Naive thymus-derived CD4-positive, alpha-beta T cell (primary cell): ENCODE measurements at regions of chr7 and their contacts with region 1.

Region 1: GRCh38 chr7:7182156-7183060 is at the start of gene C1GALT1:
- DNase-seq: peak; percentile 92 to 98 (median 98)
- ATAC-seq: peak; percentile 93
- H3K4me3 ChIP-seq: peak within 1 kb of the TSS; percentile 91
- H3K4me3 Mint-ChIP-seq: peak within 1 kb of the TSS in 9 of 10 donors; percentile 87 to 97 (median 94)
- H3K27ac ChIP-seq: peak within 1 kb of the TSS; percentile 95
- H3K27ac Mint-ChIP-seq: peak within 1 kb of the TSS; percentile 93 to 100 (median 98)
- H3K4me1 ChIP-seq: peaks cover 22% of the 10 kb centered on the region in 2 donors
- H3K4me1 Mint-ChIP-seq: peaks cover 0 to 14% (median 10%) of the 10 kb centered on the region in 7 donors
- H3K27me3 ChIP-seq: no peaks in the 10 kb centered on the region
- H3K27me3 Mint-ChIP-seq: no peaks in the 10 kb centered on the region
- total RNA-seq, gene C1GALT1: 51.4 to 60.1 (median 55.6) TPM

Region 2: DNA sequence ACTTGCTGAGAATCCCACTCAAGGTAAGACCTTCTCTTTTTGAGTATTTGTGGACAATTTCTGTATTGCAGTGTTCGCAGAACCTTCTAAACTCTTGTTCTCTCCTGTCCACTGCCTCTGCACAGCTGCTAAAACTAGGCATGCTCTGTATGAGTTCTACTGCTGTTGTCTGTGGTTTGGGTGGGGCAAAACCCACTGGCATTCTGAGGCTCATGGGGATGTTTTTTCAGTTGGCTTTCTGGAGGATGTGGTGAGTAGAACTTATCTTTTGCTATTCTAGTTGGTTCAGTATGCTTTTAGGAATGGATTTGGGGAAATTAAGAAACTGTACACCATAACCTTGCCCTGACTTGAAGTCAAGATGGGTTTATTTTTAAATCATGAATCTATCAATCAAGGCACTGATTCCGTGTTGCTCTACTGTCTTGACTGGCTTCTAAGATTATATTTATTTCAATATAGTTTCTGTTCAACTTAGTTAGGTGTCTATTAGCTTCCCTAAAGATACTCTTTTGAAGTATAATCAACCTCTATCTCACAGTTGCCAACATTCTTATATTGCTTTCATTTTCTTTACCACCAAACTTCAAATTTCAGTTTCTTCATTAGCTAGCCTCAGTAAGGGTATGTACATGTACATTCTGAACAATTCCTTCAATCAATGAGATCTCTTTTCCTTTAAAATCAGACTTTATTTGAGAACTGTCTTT is 25.1 kb before region 1 on chr7:
- CTCF ChIA-PET with region 1: interaction called, 21 read pairs
- POLR2A ChIA-PET with region 1: interaction called, 109 read pairs
- intact Hi-C with region 1: loop called (anchors 1 kb)
- DNase-seq: peak; percentile 16 to 89 (median 83)
- ATAC-seq: peak; percentile 97
- H3K4me3 ChIP-seq: peak overlapping the region; percentile 51
- H3K4me3 Mint-ChIP-seq: peak overlapping the region; percentile 51 to 90 (median 79)
- H3K27ac ChIP-seq: peak overlapping the region; percentile 67
- H3K27ac Mint-ChIP-seq: peak overlapping the region; percentile 81 to 99 (median 92)
- H3K4me1 ChIP-seq: peaks cover 34 to 46% of the 10 kb centered on the region in 2 donors
- H3K4me1 Mint-ChIP-seq: peaks cover 40 to 82% (median 73%) of the 10 kb centered on the region in 7 donors
- H3K27me3 ChIP-seq: no peaks in the 10 kb centered on the region
- H3K27me3 Mint-ChIP-seq: no peaks in the 10 kb centered on the region

Region 3: GRCh38 chr7:7221602-7222038 is 39.2 kb after region 1 on chr7:
- CTCF ChIA-PET with region 1: no interaction called
- POLR2A ChIA-PET with region 1: no interaction called
- intact Hi-C with region 1: loop called in 1 of 2 experiments (anchors 5 kb)
- DNase-seq: no peak
- ATAC-seq: no peak
- H3K4me3 ChIP-seq: no peak overlapping the region
- H3K4me3 Mint-ChIP-seq: peak overlapping the region in 1 of 10 donors; percentile 11
- H3K27ac ChIP-seq: no peak overlapping the region
- H3K27ac Mint-ChIP-seq: peak overlapping the region in 2 of 9 donors; percentile 9 to 25
- H3K4me1 ChIP-seq: no peaks in the 10 kb centered on the region
- H3K4me1 Mint-ChIP-seq: peaks cover 19 to 66% (median 51%) of the 10 kb centered on the region in 7 donors
- H3K27me3 ChIP-seq: no peaks in the 10 kb centered on the region
- H3K27me3 Mint-ChIP-seq: no peaks in the 10 kb centered on the region

Region 4: DNA sequence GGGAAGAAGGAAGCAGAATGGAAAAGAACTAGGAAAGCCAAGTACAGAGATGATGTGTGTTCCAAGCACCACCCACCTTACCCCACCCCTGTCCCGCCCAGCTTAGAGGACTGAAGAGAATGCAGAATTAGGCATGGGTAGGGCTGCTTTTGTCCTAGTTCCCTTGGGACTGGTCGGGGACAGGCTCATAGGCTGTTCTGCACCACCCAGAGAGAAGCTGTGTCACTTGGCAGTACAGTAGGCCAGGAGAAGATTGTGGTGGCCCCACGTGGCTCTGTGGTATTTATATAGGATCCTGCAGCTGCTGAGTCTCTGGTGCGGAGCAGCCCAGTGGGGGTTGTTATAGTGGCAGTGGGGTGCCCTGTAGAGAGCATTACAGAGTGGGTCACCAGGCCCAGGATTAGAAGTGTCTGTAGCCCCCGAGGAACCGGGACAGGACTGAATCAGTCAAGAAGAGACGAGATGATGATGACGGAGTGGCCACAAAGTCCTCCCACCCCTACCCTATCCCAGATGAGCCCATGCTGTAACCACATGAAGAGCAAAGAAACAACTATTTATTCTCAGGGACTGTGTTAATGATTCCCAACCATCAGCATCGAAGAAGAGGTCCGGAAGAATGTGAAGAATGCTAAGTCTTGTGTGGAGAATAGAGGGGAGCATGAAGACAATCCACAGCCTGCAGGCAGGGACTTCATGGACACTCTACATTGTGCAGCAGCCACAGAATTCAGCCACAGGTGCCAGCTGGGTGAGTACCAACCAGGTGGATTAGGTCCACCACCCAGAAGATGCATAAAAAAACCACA is 88.9 kb after region 1 on chr7:
- CTCF ChIA-PET with region 1: no interaction called
- POLR2A ChIA-PET with region 1: no interaction called
- intact Hi-C with region 1: no loop called
- DNase-seq: no peak
- ATAC-seq: no peak
- H3K4me3 ChIP-seq: no peak overlapping the region
- H3K4me3 Mint-ChIP-seq: peak overlapping the region in 1 of 10 donors; percentile 6
- H3K27ac ChIP-seq: no peak overlapping the region
- H3K27ac Mint-ChIP-seq: no peak overlapping the region
- H3K4me1 ChIP-seq: no peaks in the 10 kb centered on the region
- H3K4me1 Mint-ChIP-seq: no peaks in the 10 kb centered on the region
- H3K27me3 ChIP-seq: no peaks in the 10 kb centered on the region
- H3K27me3 Mint-ChIP-seq: peaks cover 0 to 6% (median 0%) of the 10 kb centered on the region in 5 donors

Region 5: DNA sequence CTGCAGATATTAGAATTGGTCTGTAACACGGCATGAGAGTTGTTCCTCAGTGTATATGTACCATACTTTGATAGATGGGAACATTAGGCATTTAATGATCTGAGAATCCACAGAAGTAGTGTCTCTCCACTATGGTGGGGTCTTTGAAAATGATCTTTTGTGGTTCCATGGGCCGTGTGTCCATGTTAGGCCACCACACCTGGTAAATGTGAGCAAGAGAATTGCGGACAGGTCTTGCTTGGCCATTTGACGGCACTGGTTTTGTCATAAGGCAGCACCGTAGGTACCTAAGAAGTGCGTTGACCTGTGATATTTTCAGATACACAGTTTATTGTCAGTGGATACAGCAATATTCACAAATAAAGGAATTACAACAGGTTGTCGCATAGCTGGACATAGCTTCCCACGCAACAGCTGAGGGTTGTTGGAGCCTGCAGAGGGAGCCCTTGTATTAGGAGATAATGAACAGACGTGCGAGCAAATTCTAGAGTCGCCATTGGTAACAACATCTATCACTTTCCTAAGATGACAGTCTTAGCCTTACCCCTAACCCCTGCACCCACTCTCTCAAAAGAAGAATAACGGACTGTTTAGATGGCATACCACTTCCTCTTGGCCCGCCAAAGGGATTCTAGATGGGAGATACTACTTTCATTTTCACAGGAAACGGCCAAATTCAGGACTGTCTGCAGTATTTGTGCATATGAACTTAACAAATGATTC is 241.9 kb after region 1 on chr7:
- CTCF ChIA-PET with region 1: interaction called, 5 read pairs
- POLR2A ChIA-PET with region 1: no interaction called
- intact Hi-C with region 1: loop called (anchors 5 kb)
- DNase-seq: peak in 6 of 9 donors; percentile 8 to 44 (median 25)
- ATAC-seq: peak; percentile 73
- H3K4me3 ChIP-seq: peak overlapping the region; percentile 59
- H3K4me3 Mint-ChIP-seq: peak overlapping the region in 8 of 10 donors; percentile 74 to 89 (median 82)
- H3K27ac ChIP-seq: no peak overlapping the region
- H3K27ac Mint-ChIP-seq: peak overlapping the region in 7 of 9 donors; percentile 9 to 80 (median 48)
- H3K4me1 ChIP-seq: no peaks in the 10 kb centered on the region
- H3K4me1 Mint-ChIP-seq: peaks cover 0 to 12% (median 5%) of the 10 kb centered on the region in 7 donors
- H3K27me3 ChIP-seq: no peaks in the 10 kb centered on the region
- H3K27me3 Mint-ChIP-seq: no peaks in the 10 kb centered on the region

Region 6: GRCh38 chr7:7640221-7641128 is 458.1 kb after region 1 on chr7 and contains the start of gene UMAD1:
- CTCF ChIA-PET with region 1: no interaction called
- POLR2A ChIA-PET with region 1: interaction called, 3 read pairs
- intact Hi-C with region 1: loop called (anchors 1 kb)
- DNase-seq: peak; percentile 86 to 100 (median 99)
- ATAC-seq: peak; percentile 97
- H3K4me3 ChIP-seq: peak within 1 kb of the TSS; percentile 79
- H3K4me3 Mint-ChIP-seq: peak within 1 kb of the TSS; percentile 90 to 98 (median 96)
- H3K27ac ChIP-seq: peak within 1 kb of the TSS; percentile 98
- H3K27ac Mint-ChIP-seq: peak within 1 kb of the TSS; percentile 97 to 99 (median 98)
- H3K4me1 ChIP-seq: peaks cover 14 to 19% of the 10 kb centered on the region in 2 donors
- H3K4me1 Mint-ChIP-seq: peaks cover 31 to 67% (median 55%) of the 10 kb centered on the region in 7 donors
- H3K27me3 ChIP-seq: no peaks in the 10 kb centered on the region
- H3K27me3 Mint-ChIP-seq: no peaks in the 10 kb centered on the region
- total RNA-seq, gene UMAD1: 11.4 to 28.5 (median 14.5) TPM

Region 7: GRCh38 chr7:8134089-8134733 is 951.8 kb after region 1 on chr7:
- CTCF ChIA-PET with region 1: no interaction called
- POLR2A ChIA-PET with region 1: interaction called, 3 read pairs
- intact Hi-C with region 1: loop called (anchors 10 kb)
- DNase-seq: peak in 8 of 9 donors; percentile 25 to 51 (median 44)
- ATAC-seq: peak; percentile 32
- H3K4me3 ChIP-seq: peak overlapping the region; percentile 7
- H3K4me3 Mint-ChIP-seq: peak overlapping the region; percentile 25 to 82 (median 61)
- H3K27ac ChIP-seq: peak overlapping the region; percentile 47
- H3K27ac Mint-ChIP-seq: peak overlapping the region; percentile 78 to 98 (median 94)
- H3K4me1 ChIP-seq: peaks cover 45 to 50% of the 10 kb centered on the region in 2 donors
- H3K4me1 Mint-ChIP-seq: peaks cover 38 to 65% (median 56%) of the 10 kb centered on the region in 7 donors
- H3K27me3 ChIP-seq: no peaks in the 10 kb centered on the region
- H3K27me3 Mint-ChIP-seq: no peaks in the 10 kb centered on the region